ENCODE measurements at regions of chr7 and their contacts with region 1.

Region 1: GRCh38 chr7:134448700-134449229 is 10.1 kb downstream of the AKR1B1 start:
- DNase-seq: no peak
- H3K4me3 ChIP-seq: no peak overlapping the region
- H3K27ac ChIP-seq: no peak overlapping the region
- H3K4me1 ChIP-seq: peaks cover 4 to 21% (median 12%) of the 10 kb centered on the region in 4 donors
- H3K27me3 ChIP-seq: no peaks in the 10 kb centered on the region
- CTCF ChIP-seq: no peak
- EP300 ChIP-seq: no peak
- POLR2A ChIP-seq: no peak

Region 2: GRCh38 chr7:134502463-134503371 is 54.0 kb after region 1 on chr7:
- in situ Hi-C with region 1: loop called in 2 of 4 experiments (anchors 5 to 10 kb)
- intact Hi-C with region 1: no loop called
- DNase-seq: peak; percentile 18
- H3K4me3 ChIP-seq: no peak overlapping the region
- H3K27ac ChIP-seq: no peak overlapping the region
- H3K4me1 ChIP-seq: no peaks in the 10 kb centered on the region
- H3K27me3 ChIP-seq: no peaks in the 10 kb centered on the region
- CTCF ChIP-seq: no peak
- EP300 ChIP-seq: no peak
- POLR2A ChIP-seq: no peak